Caco-2 (cell line): ENCODE measurements at regions of chr13 and their contacts with region 1.

Region 1: DNA sequence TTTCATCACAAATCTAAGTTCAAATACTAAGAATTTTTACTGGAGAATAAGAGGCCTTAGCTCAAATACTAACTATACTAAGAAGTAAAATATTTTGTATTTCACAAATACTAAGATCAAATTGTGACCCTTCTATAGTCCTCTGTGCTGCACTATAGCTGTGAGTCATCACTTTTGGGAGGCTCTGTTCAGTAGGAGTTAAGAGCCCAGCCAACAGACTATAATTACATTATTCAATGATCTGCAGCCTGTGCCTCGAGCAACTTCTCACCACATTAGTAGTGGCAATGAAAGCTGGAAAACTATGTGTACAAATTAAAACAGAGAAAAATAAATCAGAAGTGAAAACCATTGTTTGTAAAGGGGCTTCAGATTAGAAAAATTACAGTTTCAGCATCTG is 147.3 kb upstream of the GPC6 start:
- DNase-seq: no peak
- H3K4me3 ChIP-seq: no peak overlapping the region
- H3K4me3 Mint-ChIP-seq: no peak overlapping the region
- H3K27ac Mint-ChIP-seq: no peak overlapping the region
- H3K4me1 ChIP-seq: no peaks in the 10 kb centered on the region
- H3K4me1 Mint-ChIP-seq: no peaks in the 10 kb centered on the region
- H3K27me3 ChIP-seq: no peaks in the 10 kb centered on the region
- H3K27me3 Mint-ChIP-seq: no peaks in the 10 kb centered on the region
- CTCF ChIP-seq: no peak

Region 2: DNA sequence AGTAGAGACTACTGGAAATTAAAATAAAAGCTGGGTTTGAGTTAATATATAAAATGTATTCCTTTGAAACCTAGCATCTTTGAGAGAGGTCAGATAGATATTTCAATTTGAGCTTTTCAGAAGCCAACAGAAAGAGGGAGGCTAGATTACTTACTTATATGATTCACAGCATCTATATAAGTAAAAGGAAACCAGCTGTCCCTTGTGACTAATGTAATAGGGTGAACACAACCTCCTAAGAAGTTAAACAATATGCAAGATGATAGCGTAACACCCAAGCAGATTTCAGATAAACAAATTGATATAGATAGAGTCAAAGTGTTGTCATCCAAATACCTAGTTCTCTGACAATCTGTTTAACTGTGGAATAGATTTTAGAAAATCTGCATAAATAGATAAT is 246.2 kb before region 1 on chr13:
- CTCF ChIA-PET with region 1: no interaction called
- POLR2A ChIA-PET with region 1: no interaction called
- intact Hi-C with region 1: loop called (anchors 5 kb)
- DNase-seq: no peak
- H3K4me3 ChIP-seq: no peak overlapping the region
- H3K4me3 Mint-ChIP-seq: no peak overlapping the region
- H3K27ac Mint-ChIP-seq: no peak overlapping the region
- H3K4me1 ChIP-seq: no peaks in the 10 kb centered on the region
- H3K4me1 Mint-ChIP-seq: no peaks in the 10 kb centered on the region
- H3K27me3 ChIP-seq: no peaks in the 10 kb centered on the region
- H3K27me3 Mint-ChIP-seq: no peaks in the 10 kb centered on the region
- CTCF ChIP-seq: no peak